Activated naive CD4-positive, alpha-beta T cell treated with anti-CD3 and anti-CD28 coated beads for 36 hours (primary cell): ENCODE measurements at regions of chr12 and their contacts with region 1.

Region 1: GRCh38 chr12:22709292-22709691 is 84.3 kb downstream of the ETNK1 start:
- DNase-seq: no peak
- H3K4me3 Mint-ChIP-seq: no peak overlapping the region
- H3K27ac Mint-ChIP-seq: no peak overlapping the region
- H3K4me1 Mint-ChIP-seq: no peaks in the 10 kb centered on the region
- H3K27me3 Mint-ChIP-seq: no peaks in the 10 kb centered on the region

Region 2: GRCh38 chr12:22729957-22730443 is 20.7 kb after region 1 on chr12:
- CTCF ChIA-PET with region 1: no interaction called
- intact Hi-C with region 1: loop called (anchors 2 kb)
- DNase-seq: no peak
- H3K4me3 Mint-ChIP-seq: no peak overlapping the region
- H3K27ac Mint-ChIP-seq: no peak overlapping the region
- H3K4me1 Mint-ChIP-seq: peaks cover 3% of the 10 kb centered on the region
- H3K27me3 Mint-ChIP-seq: peaks cover 1% of the 10 kb centered on the region

Region 3: GRCh38 chr12:23204933-23205778 is 495.9 kb after region 1 on chr12:
- CTCF ChIA-PET with region 1: no interaction called
- intact Hi-C with region 1: loop called (anchors 10 kb)
- DNase-seq: peak; percentile 13
- H3K4me3 Mint-ChIP-seq: no peak overlapping the region
- H3K27ac Mint-ChIP-seq: no peak overlapping the region
- H3K4me1 Mint-ChIP-seq: no peaks in the 10 kb centered on the region
- H3K27me3 Mint-ChIP-seq: peaks cover 5% of the 10 kb centered on the region